ENCODE measurements at regions of chr3 and their contacts with region 1.

Region 1: GRCh38 chr3:12663936-12664908 is at the start of gene RAF1:
- DNase-seq: peak; percentile 99
- total RNA-seq, gene RAF1: 73.9 to 85.4 TPM

Region 2: DNA sequence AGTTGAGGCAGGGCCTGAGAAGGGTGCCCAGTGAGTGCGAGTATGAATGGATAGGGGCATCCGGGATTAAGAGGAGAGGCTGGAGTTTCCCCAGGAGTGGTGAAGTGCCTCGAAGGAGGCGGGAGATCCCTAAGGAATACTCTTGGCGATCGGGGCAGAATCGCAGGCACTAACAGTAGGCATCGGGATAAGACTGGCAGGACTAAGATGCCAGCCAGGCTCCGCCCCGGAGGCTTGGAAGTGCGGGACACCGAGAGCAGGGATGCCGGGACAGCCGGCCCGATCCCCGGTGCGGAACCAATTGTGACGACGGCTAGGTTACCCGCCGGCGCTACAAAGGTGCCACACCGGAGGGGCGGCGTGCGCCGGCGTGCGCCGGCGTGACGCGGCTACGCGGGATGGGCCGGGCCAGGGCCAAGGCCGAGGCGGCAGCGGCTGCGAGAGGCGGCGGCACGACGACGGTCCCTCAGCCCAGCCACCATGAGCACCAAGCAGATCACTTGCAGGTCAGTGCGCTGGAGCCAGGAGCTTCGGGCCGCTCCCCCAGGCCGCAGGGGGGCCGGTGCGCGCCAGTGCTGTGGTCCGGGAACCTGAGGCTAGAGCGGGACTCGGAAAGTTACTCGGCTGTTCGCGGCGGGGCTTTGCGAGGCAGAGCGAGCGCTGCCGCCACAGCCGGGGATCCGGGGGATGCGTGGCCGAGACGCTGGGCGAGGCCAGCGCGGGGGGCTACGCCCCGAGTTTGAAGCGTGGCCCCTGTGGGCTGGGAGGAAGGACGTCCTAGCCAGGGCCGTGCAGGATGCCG is 107.3 kb before region 1 on chr3 and contains the start of gene MKRN2:
- intact Hi-C with region 1: loop called in 1 of 2 experiments (anchors 5 kb)
- DNase-seq: peak; percentile 96
- total RNA-seq, gene MKRN2: 21.6 to 23.9 TPM

Region 3: DNA sequence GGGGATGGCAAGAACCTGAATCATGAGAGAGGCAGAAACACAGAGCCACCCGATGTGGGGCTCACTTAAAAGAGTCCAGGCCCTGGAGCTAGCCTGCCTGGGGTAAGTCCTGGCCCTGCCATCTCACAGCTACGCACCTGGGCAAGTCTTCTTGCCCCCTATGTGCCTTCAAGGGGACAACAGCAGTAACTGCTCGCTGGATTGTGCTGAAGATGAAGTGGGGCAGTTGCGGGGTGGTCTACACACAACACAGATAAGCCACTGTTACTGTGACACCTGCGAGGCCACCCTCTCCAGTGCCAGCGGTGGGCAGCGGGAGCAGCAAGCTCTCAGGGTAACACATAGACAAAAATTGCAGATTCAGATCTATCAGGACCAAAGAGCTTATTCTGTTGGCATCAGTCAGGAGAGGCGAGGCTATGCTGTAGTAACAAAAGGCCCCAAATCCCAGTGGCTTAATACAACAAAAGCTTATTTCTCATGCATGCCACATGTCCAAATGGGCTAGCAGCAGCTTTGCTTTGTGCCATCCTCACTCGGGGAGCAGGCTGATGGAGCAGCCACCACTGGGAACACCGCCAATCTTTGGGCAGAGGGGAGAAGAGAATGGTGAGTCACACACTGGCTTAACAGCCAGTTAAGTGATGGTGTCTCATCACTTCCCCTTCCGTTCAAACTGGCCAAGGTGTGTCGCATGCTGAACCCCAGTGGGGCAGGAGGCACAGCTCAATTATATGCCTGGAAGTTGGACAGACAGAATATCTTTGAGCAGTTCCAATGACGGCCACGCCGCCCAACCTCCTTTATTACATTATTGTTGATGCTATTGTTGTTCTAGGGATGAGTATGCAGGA is 1137.4 kb after region 1 on chr3:
- intact Hi-C with region 1: no loop called
- DNase-seq: peak; percentile 55